ENCODE measurements at regions of chr2 and their contacts with region 1.

Region 1: GRCh38 chr2:174985630-174986029 is 19.6 kb downstream of the CHN1 start:
- DNase-seq: peak; percentile 55
- H3K4me3 ChIP-seq: no peak overlapping the region
- H3K27ac ChIP-seq: no peak overlapping the region
- H3K4me1 ChIP-seq: no peaks in the 10 kb centered on the region
- H3K27me3 ChIP-seq: no peaks in the 10 kb centered on the region
- CTCF ChIP-seq: peak; percentile 21 to 36
- POLR2A ChIP-seq: no peak

Region 2: GRCh38 chr2:174846941-174847938 is 138.4 kb before region 1 on chr2:
- CTCF ChIA-PET with region 1: no interaction called
- POLR2A ChIA-PET with region 1: no interaction called
- dilution Hi-C with region 1: no loop called
- intact Hi-C with region 1: no loop called
- DNase-seq: peak; percentile 53
- H3K4me3 ChIP-seq: no peak overlapping the region
- H3K27ac ChIP-seq: no peak overlapping the region
- H3K4me1 ChIP-seq: peaks cover 2% of the 10 kb centered on the region
- H3K27me3 ChIP-seq: no peaks in the 10 kb centered on the region
- CTCF ChIP-seq: no peak
- POLR2A ChIP-seq: no peak

Region 3: GRCh38 chr2:174971865-174972781 is 13.5 kb before region 1 on chr2:
- CTCF ChIA-PET with region 1: interaction called, 26 read pairs
- POLR2A ChIA-PET with region 1: interaction called, 5 read pairs
- dilution Hi-C with region 1: no loop called
- intact Hi-C with region 1: no loop called
- DNase-seq: peak; percentile 96
- H3K4me3 ChIP-seq: peak overlapping the region in 1 of 3 experiments; percentile 34
- H3K27ac ChIP-seq: peak overlapping the region; percentile 93
- H3K4me1 ChIP-seq: peaks cover 34% of the 10 kb centered on the region
- H3K27me3 ChIP-seq: no peaks in the 10 kb centered on the region
- CTCF ChIP-seq: no peak
- POLR2A ChIP-seq: no peak

Measured in endothelial cell of umbilical vein (primary cell).